ENCODE measurements at regions of chr10 and their contacts with region 1.

Region 1: GRCh38 chr10:71771821-71772617 is 1.3 kb downstream of the VSIR start:
- DNase-seq: peak; percentile 72
- H3K4me3 ChIP-seq: peak overlapping the region; percentile 96
- H3K27ac ChIP-seq: peak overlapping the region; percentile 99
- H3K4me1 ChIP-seq: peaks cover 92% of the 10 kb centered on the region
- H3K27me3 ChIP-seq: no peaks in the 10 kb centered on the region
- CTCF ChIP-seq: no peak

Region 2: GRCh38 chr10:71727738-71728737 is 44.0 kb before region 1 on chr10:
- intact Hi-C with region 1: loop called (anchors 10 kb)
- DNase-seq: peak; percentile 70
- H3K4me3 ChIP-seq: peak overlapping the region; percentile 10
- H3K27ac ChIP-seq: peak overlapping the region; percentile 83
- H3K4me1 ChIP-seq: peaks cover 46% of the 10 kb centered on the region
- H3K27me3 ChIP-seq: no peaks in the 10 kb centered on the region
- CTCF ChIP-seq: no peak

Measured in left ventricle myocardium inferior (tissue), 1 donor.